ENCODE measurements at regions of chr9 and their contacts with region 1.

Region 1: DNA sequence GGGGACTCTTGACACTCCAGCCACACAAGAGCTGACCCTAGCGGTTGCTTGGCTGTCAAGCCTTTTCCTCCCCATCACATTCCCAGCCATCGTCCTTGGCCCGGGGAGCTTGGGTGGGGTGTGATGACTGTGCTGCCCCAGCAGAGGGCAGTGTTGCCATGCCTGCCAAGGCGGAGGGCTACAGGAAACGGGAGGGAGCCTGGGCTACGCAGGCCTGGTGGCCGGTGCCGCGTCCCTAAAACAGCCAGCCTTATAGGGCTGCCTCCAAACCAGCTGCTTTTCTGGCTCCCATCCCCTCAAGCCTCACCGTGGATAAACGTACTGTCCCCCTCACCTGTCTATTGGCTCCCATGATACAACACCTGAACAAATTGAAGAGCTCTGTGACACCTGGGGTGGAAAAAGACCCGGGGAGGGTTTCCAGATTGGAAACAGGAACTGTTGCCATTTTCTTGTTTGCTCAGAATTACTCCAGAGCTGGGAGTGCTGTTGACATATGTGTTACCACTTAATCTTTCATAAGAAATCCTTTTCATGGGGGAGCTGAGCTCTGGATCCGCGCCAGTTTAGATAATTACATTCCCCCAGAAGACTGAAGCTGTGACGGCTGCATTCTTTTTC is 72.8 kb upstream of the ASTN2 start:
- DNase-seq: peak; percentile 82 to 94
- H3K4me3 ChIP-seq: peak overlapping the region in 1 of 4 experiments; percentile 45; a peak in 1 of 8 replicates
- H3K27ac ChIP-seq: no peak overlapping the region
- H3K4me1 ChIP-seq: peaks cover 0 to 8% (median 0%) of the 10 kb centered on the region in 4 experiments; a peak in 3 of 7 replicates
- H3K27me3 ChIP-seq: no peaks in the 10 kb centered on the region
- CTCF ChIP-seq: peak; percentile 96 to 100 (median 98)
- EP300 ChIP-seq: peak in 1 of 2 experiments; percentile 12; a peak in 1 of 3 replicates
- POLR2A ChIP-seq: no peak
- RAD21 ChIP-seq: peak; percentile 98 to 99

Region 2: DNA sequence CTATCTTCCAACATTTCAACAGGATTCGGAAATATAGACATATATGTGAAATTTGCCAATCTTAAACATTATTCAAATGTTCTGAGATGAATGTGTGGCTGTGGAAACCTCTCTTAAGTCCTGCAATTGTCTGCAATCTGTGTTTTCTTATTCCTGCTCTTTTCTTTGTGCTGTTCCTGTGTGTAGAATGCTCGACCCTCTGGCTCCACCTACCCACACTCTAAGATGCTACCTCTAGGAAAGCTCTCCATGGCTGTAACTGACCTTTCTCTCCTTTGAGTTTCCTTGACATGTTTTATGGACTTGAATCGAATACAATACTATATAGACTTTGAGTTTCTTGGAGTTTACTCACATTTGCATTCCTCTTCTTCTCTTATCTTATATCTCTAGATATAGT is 47.8 kb after region 1 on chr9:
- CTCF ChIA-PET with region 1: interaction called, 34 read pairs
- POLR2A ChIA-PET with region 1: no interaction called
- DNase-seq: no peak
- H3K4me3 ChIP-seq: no peak overlapping the region
- H3K27ac ChIP-seq: no peak overlapping the region
- H3K4me1 ChIP-seq: no peaks in the 10 kb centered on the region; a peak in 1 of 7 replicates
- H3K27me3 ChIP-seq: no peaks in the 10 kb centered on the region
- CTCF ChIP-seq: peak in 2 of 3 experiments; percentile 37 to 51; a peak in 3 of 4 replicates
- EP300 ChIP-seq: no peak
- POLR2A ChIP-seq: no peak
- RAD21 ChIP-seq: peak; percentile 43 to 52

Region 3: GRCh38 chr9:117546894-117547678 is 59.4 kb after region 1 on chr9:
- CTCF ChIA-PET with region 1: interaction called, 24 read pairs
- POLR2A ChIA-PET with region 1: no interaction called
- DNase-seq: no peak
- H3K4me3 ChIP-seq: peak overlapping the region in 1 of 4 experiments; percentile 6; a peak in 1 of 8 replicates
- H3K27ac ChIP-seq: no peak overlapping the region
- H3K4me1 ChIP-seq: peaks cover 5 to 24% (median 14%) of the 10 kb centered on the region in 4 experiments
- H3K27me3 ChIP-seq: no peaks in the 10 kb centered on the region
- CTCF ChIP-seq: no peak
- EP300 ChIP-seq: no peak
- POLR2A ChIP-seq: no peak
- RAD21 ChIP-seq: no peak

Region 4: DNA sequence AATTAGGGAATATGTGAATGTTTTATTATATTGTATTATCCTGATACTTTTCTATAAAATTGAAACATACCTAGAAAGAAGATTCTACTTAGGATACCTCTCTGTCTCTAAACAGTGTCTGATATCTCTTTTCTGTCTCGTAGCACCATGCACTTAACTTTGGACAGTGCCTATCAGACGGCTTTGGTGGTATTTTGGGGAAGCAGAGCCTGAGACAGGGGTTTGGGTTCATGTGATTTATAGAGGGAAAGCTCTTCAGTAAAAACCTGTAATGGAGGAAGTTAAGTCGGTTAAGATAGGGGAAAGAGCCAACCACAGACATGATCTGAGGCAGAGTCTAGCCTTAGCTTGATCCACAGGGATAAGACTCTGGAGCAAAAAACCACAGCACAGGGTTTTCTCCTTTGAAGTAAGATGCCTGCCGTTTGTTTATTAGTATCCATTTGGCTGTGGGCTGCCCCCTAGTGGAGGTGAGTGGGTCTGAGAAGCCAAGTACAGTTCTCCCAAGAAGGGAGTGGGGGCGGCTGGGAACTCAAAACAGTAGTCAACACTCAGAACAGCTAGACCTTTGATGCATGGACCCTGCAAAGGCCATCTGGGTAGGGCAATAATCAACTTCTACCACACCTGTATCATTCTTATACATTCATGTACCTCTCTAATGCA is 68.4 kb after region 1 on chr9:
- CTCF ChIA-PET with region 1: interaction called, 20 read pairs
- POLR2A ChIA-PET with region 1: no interaction called
- DNase-seq: peak; percentile 27 to 89
- H3K4me3 ChIP-seq: no peak overlapping the region
- H3K27ac ChIP-seq: no peak overlapping the region
- H3K4me1 ChIP-seq: no peaks in the 10 kb centered on the region
- H3K27me3 ChIP-seq: no peaks in the 10 kb centered on the region
- CTCF ChIP-seq: peak; percentile 56 to 80 (median 75)
- EP300 ChIP-seq: no peak
- POLR2A ChIP-seq: no peak
- RAD21 ChIP-seq: peak; percentile 50 to 72; a peak in 3 of 4 replicates

Region 5: DNA sequence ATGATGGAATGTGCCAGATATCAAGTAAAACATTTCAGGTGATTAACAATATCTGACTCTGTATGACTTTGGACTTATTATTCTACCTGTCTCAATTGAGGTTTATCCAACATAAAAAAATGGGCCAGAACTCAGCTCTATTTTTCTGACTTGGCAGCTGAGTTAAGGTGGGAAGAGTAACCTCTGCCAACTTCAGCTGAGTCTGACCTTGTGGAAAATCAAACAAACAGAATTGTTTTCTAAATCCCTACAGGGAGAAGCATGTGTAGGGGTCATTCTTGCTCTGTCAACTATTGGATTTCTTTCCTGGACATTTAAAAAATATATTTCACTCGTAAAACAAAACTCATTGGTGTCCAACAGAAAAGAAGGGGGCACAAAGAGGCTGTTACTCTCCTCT is 77.2 kb after region 1 on chr9:
- CTCF ChIA-PET with region 1: interaction called, 12 read pairs
- POLR2A ChIA-PET with region 1: no interaction called
- DNase-seq: no peak
- H3K4me3 ChIP-seq: no peak overlapping the region
- H3K27ac ChIP-seq: no peak overlapping the region
- H3K4me1 ChIP-seq: no peaks in the 10 kb centered on the region
- H3K27me3 ChIP-seq: no peaks in the 10 kb centered on the region
- CTCF ChIP-seq: no peak
- EP300 ChIP-seq: no peak
- POLR2A ChIP-seq: no peak
- RAD21 ChIP-seq: no peak

Region 6: DNA sequence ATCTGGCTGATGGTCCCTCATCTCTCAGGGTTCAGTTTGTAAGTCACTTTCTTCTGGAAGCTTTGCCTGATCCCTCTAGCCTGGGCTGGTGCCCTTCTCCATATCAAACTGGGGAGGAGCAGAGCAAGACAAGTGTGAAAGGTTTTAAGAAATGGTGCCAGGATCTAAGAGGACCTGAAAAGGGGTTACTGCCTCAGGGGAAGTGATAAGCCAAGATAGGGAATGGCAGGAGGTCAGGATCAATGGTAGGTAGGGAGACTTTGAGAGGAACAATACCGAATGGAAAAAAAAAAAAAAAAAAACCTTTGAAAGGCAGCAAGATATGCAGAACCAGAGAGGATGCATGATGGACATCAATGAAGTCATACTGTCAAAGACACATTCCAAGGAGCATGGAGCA is 149.0 kb after region 1 on chr9:
- CTCF ChIA-PET with region 1: interaction called, 12 read pairs
- POLR2A ChIA-PET with region 1: no interaction called
- DNase-seq: no peak
- H3K4me3 ChIP-seq: no peak overlapping the region
- H3K27ac ChIP-seq: no peak overlapping the region
- H3K4me1 ChIP-seq: no peaks in the 10 kb centered on the region
- H3K27me3 ChIP-seq: no peaks in the 10 kb centered on the region
- CTCF ChIP-seq: no peak
- EP300 ChIP-seq: no peak
- POLR2A ChIP-seq: no peak
- RAD21 ChIP-seq: no peak

Region 7: GRCh38 chr9:117644133-117644931 is 156.7 kb after region 1 on chr9:
- CTCF ChIA-PET with region 1: interaction called, 12 read pairs
- POLR2A ChIA-PET with region 1: no interaction called
- DNase-seq: peak; percentile 43 to 90
- H3K4me3 ChIP-seq: no peak overlapping the region
- H3K27ac ChIP-seq: no peak overlapping the region
- H3K4me1 ChIP-seq: no peaks in the 10 kb centered on the region
- H3K27me3 ChIP-seq: no peaks in the 10 kb centered on the region
- CTCF ChIP-seq: peak; percentile 80 to 93 (median 84)
- EP300 ChIP-seq: no peak
- POLR2A ChIP-seq: no peak
- RAD21 ChIP-seq: peak; percentile 98 to 99

Measured in H1 (cell line).